PC-9 (cell line): ENCODE measurements at regions of chr13 and their contacts with region 1.

Region 1: GRCh38 chr13:37602747-37603381 is 4.3 kb upstream of the POSTN start:
- DNase-seq: no peak
- H3K4me3 ChIP-seq: no peak overlapping the region
- H3K27ac ChIP-seq: no peak overlapping the region
- H3K4me1 ChIP-seq: no peaks in the 10 kb centered on the region
- H3K27me3 ChIP-seq: no peaks in the 10 kb centered on the region
- CTCF ChIP-seq: peak; percentile 74

Region 2: GRCh38 chr13:36999054-36999714 is 603.7 kb before region 1 on chr13 and contains the start of gene ALG5:
- CTCF ChIA-PET with region 1: no interaction called
- POLR2A ChIA-PET with region 1: no interaction called
- intact Hi-C with region 1: loop called (anchors 5 kb)
- DNase-seq: peak; percentile 69 to 86
- H3K4me3 ChIP-seq: peak within 1 kb of the TSS; percentile 98
- H3K27ac ChIP-seq: peak within 1 kb of the TSS; percentile 93
- H3K4me1 ChIP-seq: peaks cover 6% of the 10 kb centered on the region; the same call in 1 of the 2 replicates
- H3K27me3 ChIP-seq: no peaks in the 10 kb centered on the region
- CTCF ChIP-seq: peak; percentile 85
- total RNA-seq, gene ALG5: 17.7 and 18.8 TPM in 2 replicates

Region 3: GRCh38 chr13:37074703-37075102 is 528.2 kb before region 1 on chr13:
- CTCF ChIA-PET with region 1: no interaction called
- POLR2A ChIA-PET with region 1: no interaction called
- intact Hi-C with region 1: loop called (anchors 10 kb)
- DNase-seq: no peak
- H3K4me3 ChIP-seq: no peak overlapping the region
- H3K27ac ChIP-seq: no peak overlapping the region
- H3K4me1 ChIP-seq: no peaks in the 10 kb centered on the region
- H3K27me3 ChIP-seq: no peaks in the 10 kb centered on the region
- CTCF ChIP-seq: peak; percentile 70

Region 4: DNA sequence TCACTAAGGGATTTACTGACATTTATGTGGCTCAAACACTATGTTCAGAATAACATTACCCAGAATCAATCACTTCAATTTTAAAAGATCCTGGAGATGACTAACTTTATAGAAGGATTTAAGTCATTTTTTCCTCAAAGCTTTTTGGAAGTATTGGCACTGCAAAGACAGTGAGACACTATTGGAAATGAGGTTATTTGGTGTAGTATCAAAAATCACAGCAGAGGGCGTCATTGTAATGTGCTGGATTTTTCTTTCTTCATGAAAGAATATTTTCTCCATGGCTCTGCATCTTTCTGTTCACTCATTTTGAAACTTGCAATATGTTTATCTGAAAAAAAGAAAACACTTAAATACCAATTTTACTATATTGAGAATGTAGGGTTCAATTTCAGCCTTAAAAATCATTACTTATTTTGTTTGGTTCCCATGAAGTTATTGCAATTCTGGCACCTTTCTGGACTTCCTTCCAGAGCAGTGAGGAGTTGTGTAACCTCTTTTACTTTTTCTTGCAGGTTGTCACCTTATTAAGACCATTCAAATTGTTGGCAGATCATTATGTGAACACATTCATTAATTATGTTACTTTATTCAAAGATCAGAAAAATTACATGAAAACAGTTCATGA is 493.7 kb before region 1 on chr13:
- CTCF ChIA-PET with region 1: no interaction called
- POLR2A ChIA-PET with region 1: no interaction called
- intact Hi-C with region 1: loop called (anchors 2 kb)
- DNase-seq: no peak
- H3K4me3 ChIP-seq: no peak overlapping the region
- H3K27ac ChIP-seq: no peak overlapping the region
- H3K4me1 ChIP-seq: no peaks in the 10 kb centered on the region
- H3K27me3 ChIP-seq: no peaks in the 10 kb centered on the region
- CTCF ChIP-seq: peak; percentile 70

Region 5: DNA sequence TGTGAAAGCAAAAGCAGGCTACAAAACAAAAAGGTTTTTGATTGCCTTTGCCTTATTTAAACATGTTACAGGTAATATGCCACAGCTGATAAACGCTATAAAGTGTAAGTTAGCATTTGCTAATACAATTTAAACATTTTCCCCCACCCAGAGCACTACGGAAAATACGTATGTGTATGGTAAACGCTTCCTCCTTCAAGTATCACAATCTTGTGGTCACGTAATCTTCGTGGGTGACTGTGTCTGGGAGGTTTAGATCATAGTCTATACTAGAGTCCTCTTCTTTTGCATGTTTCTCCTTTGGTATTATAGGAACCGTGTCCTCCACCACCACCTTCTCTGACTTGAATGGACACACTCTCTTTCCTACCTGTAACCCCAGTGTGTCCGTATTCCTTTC is 33.8 kb after region 1 on chr13:
- CTCF ChIA-PET with region 1: no interaction called
- POLR2A ChIA-PET with region 1: no interaction called
- intact Hi-C with region 1: no loop called
- DNase-seq: no peak
- H3K4me3 ChIP-seq: no peak overlapping the region
- H3K27ac ChIP-seq: no peak overlapping the region
- H3K4me1 ChIP-seq: no peaks in the 10 kb centered on the region
- H3K27me3 ChIP-seq: no peaks in the 10 kb centered on the region
- CTCF ChIP-seq: no peak